ENCODE measurements at regions of chr9 and their contacts with region 1.

Region 1: DNA sequence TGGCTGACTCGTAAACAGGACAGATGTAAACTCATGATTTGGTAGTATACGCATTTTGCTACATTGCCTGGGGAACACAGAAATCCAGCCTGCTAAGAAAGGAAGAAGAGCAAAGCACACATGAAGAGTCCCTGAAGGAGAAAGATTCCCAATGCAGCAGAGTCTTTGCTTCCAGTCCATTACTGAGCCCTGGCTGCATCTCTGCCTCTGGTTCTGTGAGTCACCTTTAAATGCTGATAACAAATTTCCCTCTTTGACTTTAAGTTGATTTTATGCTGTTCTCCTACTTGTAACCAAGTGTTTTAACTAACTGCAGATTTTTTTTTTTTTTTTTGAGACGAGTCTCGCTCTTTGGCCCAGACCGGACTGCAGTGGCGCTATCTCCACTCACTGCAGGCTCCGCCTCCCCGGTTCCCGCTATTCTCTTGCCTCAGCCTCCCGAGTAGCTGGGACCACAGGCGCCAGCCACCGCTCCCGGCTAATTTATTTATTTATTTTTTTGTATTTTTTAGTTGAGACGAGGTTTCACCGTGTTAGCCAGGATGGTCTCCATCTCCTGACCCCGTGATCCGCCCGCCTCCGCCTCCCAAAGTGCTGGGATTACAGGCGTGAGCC is 8.5 kb upstream of the PRXL2C start:
- DNase-seq: no peak

Region 2: DNA sequence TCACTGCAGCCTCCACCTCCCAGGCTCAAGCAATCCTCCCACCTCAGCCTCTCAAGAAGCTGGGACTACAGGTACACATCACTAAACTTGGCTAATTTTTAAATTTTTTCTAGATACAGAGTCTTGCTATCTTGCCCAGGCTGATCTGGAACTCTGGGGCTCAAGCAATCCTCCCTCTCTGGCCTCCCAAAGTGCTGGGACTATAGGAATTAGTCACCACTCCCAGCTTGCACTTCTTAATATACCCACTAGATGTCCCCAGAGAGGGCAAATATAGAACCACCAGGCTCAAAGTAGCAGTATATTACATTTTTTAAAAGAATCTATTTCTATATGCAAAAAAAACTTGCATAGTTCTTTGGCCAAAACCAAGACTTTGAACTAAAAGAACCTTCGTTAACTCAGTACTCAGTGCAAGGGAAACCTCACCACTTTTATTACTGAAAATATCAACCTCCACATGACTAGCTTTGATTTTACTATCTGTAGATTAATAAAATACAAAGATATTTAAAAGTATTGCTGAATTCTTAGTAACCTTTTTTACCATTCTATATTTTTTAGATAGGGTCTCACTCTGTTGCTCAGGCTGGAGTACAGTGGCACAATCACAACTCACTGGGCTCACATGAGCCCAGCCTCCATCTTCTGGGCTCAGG is 335.8 kb before region 1 on chr9:
- intact Hi-C with region 1: loop called (anchors 5 kb)
- DNase-seq: no peak

Region 3: GRCh38 chr9:96449845-96450612 is 213.6 kb before region 1 on chr9 and contains the start of gene HABP4:
- intact Hi-C with region 1: loop called (anchors 2 kb)
- DNase-seq: peak; percentile 98
- total RNA-seq, gene HABP4: 29.7 TPM

Region 4: GRCh38 chr9:96612105-96612965 is 51.3 kb before region 1 on chr9:
- intact Hi-C with region 1: no loop called
- DNase-seq: no peak